ENCODE measurements at regions of chr5 and their contacts with region 1.

Region 1: GRCh38 chr5:112419986-112420864 is 1.1 kb upstream of the EPB41L4A start:
- DNase-seq: peak; percentile 90
- ATAC-seq: peak; percentile 96

Region 2: DNA sequence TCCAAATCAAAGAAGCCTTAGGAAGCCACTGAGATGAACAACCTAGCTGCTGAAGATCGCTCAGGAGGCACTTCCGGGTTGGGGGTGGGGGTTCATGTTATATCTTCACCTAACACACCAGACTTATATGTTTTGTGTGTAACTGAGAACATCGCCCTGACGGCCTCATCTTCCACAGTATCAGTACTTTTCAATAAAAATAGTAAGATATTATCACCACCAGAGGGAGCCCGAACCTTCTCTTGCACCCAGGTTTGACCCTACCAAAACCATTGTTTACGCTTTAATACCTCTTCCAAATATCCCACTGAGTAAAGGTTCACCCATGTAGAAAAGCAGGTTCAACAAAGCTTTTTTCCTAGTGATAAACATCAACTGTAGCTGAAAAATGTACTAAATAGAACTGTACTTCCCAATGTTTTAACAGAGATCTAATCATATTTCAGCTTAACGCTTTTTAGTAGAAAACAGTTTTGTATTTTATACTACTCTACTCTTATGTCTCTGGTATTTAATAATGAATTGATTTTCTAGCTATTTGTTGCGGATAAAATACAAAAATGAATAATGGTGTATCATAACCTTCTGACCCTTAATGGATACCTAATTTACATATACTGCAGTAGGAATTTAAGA is 245.1 kb before region 1 on chr5:
- intact Hi-C with region 1: loop called (anchors 1 kb)
- DNase-seq: no peak
- ATAC-seq: peak; percentile 56

Region 3: DNA sequence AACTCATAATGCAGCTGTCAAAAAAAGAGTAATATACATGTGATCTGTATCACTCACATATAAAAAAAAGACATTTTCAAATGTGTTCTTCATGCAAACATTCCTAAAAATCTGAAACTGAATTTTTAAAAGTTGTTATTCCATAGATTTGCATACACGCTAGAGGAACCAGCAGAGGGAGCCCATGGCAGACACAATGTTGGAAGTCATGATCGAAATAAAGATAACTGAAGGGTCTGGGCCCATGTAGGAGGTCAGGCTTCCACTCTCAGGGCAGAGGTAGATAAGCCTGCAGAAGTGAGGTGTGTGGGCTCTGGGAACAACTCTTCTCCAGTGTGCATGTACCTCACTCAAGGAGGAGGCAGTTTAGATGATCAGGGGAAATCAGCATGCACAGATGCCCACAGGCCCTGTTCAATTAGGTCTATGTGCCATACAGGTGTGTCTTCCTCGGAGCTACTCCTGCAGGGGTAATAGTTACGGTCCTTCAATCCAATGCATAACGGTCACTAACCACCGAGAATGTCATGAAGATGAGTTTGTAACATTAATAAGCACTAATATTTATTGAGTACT is 209.7 kb before region 1 on chr5:
- intact Hi-C with region 1: loop called (anchors 1 kb)
- DNase-seq: no peak
- ATAC-seq: peak; percentile 54

Region 4: DNA sequence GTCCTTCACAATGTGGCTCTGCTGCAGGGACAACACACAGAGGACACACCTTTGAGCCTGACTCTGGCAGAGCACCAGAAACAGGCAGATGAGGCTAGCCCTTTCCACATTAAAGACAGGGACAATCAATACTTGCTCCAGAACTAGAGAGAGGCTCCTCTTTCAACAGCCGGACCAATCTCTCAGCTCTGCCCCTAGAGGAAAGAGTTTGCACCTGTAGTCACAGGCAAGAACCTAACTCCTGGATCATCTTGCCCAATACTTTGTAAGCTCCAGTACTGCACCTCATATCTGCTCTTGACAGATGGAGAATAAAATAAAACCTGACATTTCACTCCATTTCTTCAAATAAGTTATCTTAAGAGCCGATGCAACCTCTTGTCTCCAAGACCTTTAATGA is 53.2 kb before region 1 on chr5:
- intact Hi-C with region 1: loop called (anchors 5 kb)
- DNase-seq: no peak
- ATAC-seq: no peak

Region 5: DNA sequence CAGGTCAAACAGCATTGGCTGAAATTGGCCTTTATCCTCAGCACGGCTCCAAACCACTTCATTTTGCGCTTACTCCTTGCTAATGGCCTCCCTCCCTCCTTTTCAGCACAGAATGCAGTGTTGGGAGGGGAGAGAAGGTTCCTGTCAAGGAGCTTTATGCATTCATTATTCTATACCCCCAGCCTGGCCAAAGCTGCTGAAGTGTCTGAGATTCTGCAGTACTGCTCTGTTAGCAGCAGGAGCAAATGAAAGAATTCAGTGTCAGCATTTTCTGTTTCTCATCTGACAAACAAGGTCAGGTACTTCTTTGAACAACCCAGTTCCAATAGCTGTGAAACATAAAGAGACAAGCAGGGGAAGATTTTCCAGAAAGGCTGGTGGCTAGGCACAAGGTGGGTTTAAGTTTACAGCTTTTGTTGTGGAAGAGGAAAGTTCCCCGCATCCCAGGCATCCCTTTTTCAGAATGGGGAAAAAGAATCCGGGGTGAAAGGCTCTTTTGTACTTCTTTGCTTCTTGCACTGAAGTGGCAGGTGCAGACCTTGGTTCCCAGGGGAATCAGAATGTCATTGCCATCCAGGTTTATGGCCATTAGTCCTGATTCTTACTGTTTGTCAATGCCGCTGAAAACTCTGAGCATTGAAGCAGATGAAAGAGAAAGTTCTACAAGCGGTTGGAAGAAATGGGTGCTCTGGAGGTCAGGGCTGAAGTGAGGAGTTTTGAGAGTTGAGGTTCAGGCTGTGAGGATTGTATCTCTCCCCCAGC is 208.2 kb after region 1 on chr5:
- intact Hi-C with region 1: no loop called
- DNase-seq: no peak
- ATAC-seq: no peak

Measured in Right ventricle myocardium inferior (tissue), 1 donor.